ENCODE measurements at regions of chr2 and their contacts with region 1.

Region 1: DNA sequence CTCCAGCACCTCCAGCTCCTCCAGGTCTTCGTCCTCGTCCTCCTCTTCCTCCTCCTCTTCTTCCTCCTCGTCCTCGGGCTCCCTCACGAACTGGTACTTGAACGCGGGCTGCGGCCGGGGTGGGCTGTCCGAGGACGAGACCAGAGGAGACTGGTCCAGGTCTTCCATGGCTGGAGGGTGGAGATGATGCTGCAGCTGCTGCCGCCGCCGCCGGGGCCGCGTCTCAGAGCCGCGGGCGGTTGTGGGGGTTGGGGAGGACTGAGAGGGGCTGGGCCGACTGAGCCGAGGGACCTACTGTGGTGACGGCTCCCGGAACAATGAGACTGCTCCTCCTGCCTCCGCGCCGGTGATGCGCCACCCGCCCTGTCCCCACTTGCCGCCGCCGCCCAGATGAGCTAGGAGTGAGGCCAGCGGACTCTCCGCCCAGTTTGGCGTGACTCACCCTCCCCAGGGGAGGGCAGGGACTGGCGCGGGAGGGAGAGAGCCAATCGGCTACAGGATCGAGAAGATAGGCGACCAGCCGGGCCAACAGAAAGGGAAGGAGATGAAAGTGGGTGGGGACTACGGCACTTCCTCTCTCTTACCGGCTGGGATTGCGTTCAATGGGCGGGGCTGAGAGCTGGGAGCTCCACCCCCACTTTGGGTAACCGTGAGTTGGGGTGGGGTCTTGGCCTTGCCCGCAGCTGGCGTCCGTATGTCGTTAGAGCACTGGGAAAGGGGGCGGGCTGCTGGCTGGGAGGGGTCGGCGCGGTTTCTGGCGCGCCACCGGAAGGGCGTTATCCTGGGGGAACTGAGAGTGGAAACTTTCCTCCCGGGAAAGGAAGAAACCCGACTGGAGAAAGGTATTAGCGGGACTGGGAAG is at the start of gene RTN4:
- DNase-seq: peak; percentile 92 to 100 (median 95)
- ATAC-seq: peak; percentile 75
- H3K4me3 ChIP-seq: peak within 1 kb of the TSS; percentile 89
- H3K27ac ChIP-seq: peak within 1 kb of the TSS; percentile 96
- H3K4me1 ChIP-seq: peaks cover 7 to 12% of the 10 kb centered on the region in 2 experiments; a peak in 3 of 5 replicates
- H3K27me3 ChIP-seq: no peaks in the 10 kb centered on the region
- CTCF ChIP-seq: peak in 1 of 3 experiments; percentile 16; a peak in 2 of 6 replicates
- EP300 ChIP-seq: no peak
- POLR2A ChIP-seq: peak; percentile 95
- RAD21 ChIP-seq: peak in 1 of 2 experiments; percentile 14; a peak in 1 of 4 replicates
- polyA plus RNA-seq, gene RTN4: 75.8 to 90.3 TPM

Region 2: DNA sequence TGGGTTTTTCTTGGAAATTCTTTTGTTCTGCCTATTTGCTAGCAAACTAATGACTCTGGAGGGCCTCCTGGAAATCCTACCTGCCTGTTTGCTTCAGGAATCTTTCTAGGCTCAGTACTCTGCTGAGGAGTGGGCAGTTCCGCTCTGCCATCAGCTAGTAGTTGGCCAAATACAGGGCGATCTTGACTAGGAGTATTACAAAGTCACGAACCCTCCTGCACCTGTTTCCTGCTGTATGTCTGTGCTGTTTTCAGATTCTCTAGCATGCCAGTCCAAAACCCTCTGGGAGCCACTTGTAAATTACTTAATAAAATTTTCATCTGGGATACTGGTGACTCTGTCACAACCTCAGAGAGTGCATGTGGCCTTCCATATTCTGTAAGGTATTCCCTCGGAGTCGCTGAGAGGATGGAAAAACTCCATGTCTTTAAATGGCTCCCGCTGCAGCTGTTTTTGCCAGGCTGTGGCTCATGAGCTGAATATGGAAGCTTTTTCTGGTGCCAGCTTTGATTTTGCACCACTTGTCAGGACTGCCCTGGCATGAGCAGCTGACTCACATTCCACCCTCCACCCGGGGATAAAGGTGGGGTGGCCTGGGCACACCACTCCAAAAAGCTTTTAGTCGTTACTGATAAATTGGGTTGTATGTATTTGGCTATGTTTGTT is 123.1 kb before region 1 on chr2:
- CTCF ChIA-PET with region 1: no interaction called
- POLR2A ChIA-PET with region 1: no interaction called
- in situ Hi-C with region 1: no loop called
- intact Hi-C with region 1: no loop called
- DNase-seq: no peak
- ATAC-seq: no peak
- H3K4me3 ChIP-seq: no peak overlapping the region
- H3K27ac ChIP-seq: no peak overlapping the region
- H3K4me1 ChIP-seq: peaks cover 0 to 5% of the 10 kb centered on the region in 2 experiments; a peak in 2 of 5 replicates
- H3K27me3 ChIP-seq: peaks cover 0 to 6% of the 10 kb centered on the region in 2 experiments; a peak in 2 of 5 replicates
- CTCF ChIP-seq: no peak
- EP300 ChIP-seq: no peak
- POLR2A ChIP-seq: no peak
- RAD21 ChIP-seq: no peak

Region 3: DNA sequence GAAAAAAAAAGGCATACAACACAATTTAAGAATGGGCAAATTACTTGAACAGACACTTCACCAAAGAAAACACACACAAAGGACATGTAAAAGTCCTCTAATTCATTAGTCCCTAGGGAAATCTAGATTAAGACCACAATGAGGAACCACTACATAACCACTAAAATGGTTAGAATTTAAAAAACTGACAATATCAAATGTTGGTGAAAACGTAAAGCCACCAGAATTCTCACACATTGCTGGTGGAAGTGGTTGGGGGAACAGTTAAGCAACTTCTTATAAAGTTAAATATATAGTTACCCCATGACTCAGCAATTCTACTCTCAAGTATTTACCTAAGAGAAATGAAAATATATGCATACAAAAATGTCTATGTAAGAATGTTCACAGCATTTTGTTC is 11.9 kb before region 1 on chr2:
- CTCF ChIA-PET with region 1: no interaction called
- POLR2A ChIA-PET with region 1: interaction called, 12 read pairs
- in situ Hi-C with region 1: no loop called
- intact Hi-C with region 1: no loop called
- DNase-seq: no peak
- ATAC-seq: no peak
- H3K4me3 ChIP-seq: no peak overlapping the region
- H3K27ac ChIP-seq: no peak overlapping the region
- H3K4me1 ChIP-seq: peaks cover 0 to 18% of the 10 kb centered on the region in 2 experiments; a peak in 4 of 5 replicates
- H3K27me3 ChIP-seq: no peaks in the 10 kb centered on the region
- CTCF ChIP-seq: no peak
- EP300 ChIP-seq: no peak
- POLR2A ChIP-seq: no peak
- RAD21 ChIP-seq: no peak

Region 4: DNA sequence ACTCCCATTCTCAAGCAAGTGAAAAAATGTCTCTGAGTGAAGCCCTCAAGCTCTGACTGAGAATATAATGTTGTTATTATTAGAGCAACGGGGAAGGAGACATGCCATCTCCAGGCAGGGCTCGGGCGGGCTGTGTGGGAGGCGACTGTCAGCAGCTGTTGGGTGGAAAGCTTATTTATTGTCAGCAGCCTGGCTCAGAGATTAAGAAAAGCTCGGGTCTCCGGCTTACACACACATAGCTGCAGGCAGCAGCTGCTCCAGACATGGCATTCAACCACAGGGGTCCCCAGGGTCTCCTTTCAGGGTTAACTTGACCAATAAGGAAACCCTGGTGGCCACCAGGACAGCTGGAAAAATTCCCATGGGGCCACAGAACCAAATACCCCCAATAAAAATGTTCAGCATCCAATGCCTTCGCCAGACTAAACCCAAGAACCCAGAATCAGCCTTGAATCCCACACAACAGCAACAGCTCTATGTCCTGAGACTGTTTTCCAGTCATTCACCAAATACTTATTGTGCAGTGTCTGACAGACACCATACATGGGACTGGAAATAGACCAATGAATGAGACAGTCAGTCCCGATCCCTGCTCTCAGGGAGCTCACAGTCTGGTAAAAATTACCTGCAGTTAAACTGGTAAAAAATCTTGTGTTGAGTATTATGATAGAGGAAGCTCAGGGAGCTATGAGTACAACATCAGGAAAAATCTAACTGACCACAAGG is 70.4 kb after region 1 on chr2:
- CTCF ChIA-PET with region 1: no interaction called
- POLR2A ChIA-PET with region 1: interaction called, 23 read pairs
- in situ Hi-C with region 1: no loop called
- intact Hi-C with region 1: loop called (anchors 2 kb)
- DNase-seq: peak in 3 of 4 experiments; percentile 29 to 84 (median 68)
- ATAC-seq: peak; percentile 66
- H3K4me3 ChIP-seq: no peak overlapping the region
- H3K27ac ChIP-seq: peak overlapping the region; percentile 65
- H3K4me1 ChIP-seq: peaks cover 35 to 64% of the 10 kb centered on the region in 2 experiments
- H3K27me3 ChIP-seq: no peaks in the 10 kb centered on the region
- CTCF ChIP-seq: no peak
- EP300 ChIP-seq: peak; percentile 54; the same call in 1 of the 2 replicates
- POLR2A ChIP-seq: no peak
- RAD21 ChIP-seq: peak in 1 of 2 experiments; percentile 20; a peak in 1 of 4 replicates

Region 5: DNA sequence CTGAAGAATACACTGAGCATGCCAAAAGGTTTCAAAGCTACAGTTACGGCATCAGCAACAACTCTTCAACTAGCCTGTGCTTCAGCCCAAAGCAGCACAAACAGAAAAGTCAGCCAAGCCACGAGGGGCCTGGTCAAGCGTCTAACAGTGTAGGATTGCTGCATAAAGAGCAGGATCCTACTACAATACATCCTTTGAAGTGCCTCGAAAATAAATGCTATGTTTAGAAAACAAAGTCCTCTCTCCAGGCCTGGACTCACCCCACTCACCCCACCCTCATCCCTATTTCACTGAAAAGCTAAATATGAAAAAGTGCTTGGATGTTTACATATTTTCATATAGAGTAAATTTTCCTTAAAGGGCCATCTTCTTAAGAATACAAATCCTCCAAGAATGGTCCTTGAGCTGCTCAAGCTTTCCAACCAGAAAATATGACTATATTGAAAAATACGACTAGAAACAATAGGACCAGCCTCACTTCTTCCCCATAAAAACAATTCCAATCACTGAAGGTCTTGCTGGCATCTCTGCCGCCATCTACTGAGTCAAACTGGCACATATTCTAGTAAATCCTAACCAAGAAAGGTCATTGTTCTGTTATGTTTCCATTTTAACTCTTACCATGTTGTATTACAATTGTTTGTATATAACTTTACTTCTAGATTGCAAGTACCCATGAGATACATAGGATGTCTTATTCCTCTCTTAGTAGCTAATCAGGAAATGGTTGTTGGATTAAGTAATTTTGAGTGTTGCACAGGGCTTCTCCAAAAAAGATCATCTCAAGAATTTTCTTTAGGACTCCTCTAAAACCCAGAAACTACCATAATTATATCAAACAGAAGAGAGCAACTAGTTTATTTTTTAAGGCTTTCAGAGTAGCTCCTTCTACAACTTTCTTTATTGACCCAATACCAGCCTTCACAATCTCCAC is 118.1 kb after region 1 on chr2:
- CTCF ChIA-PET with region 1: interaction called, 13 read pairs
- POLR2A ChIA-PET with region 1: interaction called, 19 read pairs
- in situ Hi-C with region 1: loop called (anchors 5 kb)
- intact Hi-C with region 1: loop called (anchors 1 kb)
- DNase-seq: peak in 2 of 4 experiments; percentile 53 to 67
- ATAC-seq: peak; percentile 63
- H3K4me3 ChIP-seq: no peak overlapping the region
- H3K27ac ChIP-seq: no peak overlapping the region; the same call in 2 of the 3 replicates
- H3K4me1 ChIP-seq: peaks cover 4 to 19% of the 10 kb centered on the region in 2 experiments; a peak in 3 of 5 replicates
- H3K27me3 ChIP-seq: no peaks in the 10 kb centered on the region
- CTCF ChIP-seq: peak; percentile 65 to 84 (median 65)
- EP300 ChIP-seq: no peak
- POLR2A ChIP-seq: no peak
- RAD21 ChIP-seq: peak; percentile 92 to 94

Region 6: GRCh38 chr2:55232084-55232862 is 181.9 kb after region 1 on chr2 and contains the starts of genes CLHC1 and RPS27A:
- CTCF ChIA-PET with region 1: no interaction called
- POLR2A ChIA-PET with region 1: interaction called, 7 read pairs
- in situ Hi-C with region 1: no loop called
- intact Hi-C with region 1: loop called (anchors 5 kb)
- DNase-seq: peak; percentile 88 to 95 (median 89)
- ATAC-seq: peak; percentile 85
- H3K4me3 ChIP-seq: peak within 1 kb of the TSS; percentile 79
- H3K27ac ChIP-seq: peak within 1 kb of the TSS; percentile 99
- H3K4me1 ChIP-seq: peaks cover 21 to 37% of the 10 kb centered on the region in 2 experiments
- H3K27me3 ChIP-seq: no peaks in the 10 kb centered on the region
- CTCF ChIP-seq: no peak
- EP300 ChIP-seq: peak; percentile 12; the same call in 1 of the 2 replicates
- POLR2A ChIP-seq: peak; percentile 99
- RAD21 ChIP-seq: 0 out of 4 replicates have a peak, but pooled peaks have one; percentile 3 to 4
- polyA plus RNA-seq, gene CLHC1: 3.7 to 4.6 TPM
- polyA plus RNA-seq, gene RPS27A: 2,423 to 2,945 TPM

Measured in K562 (cell line).